ENCODE measurements at regions of chr6 and their contacts with region 1.

Region 1: DNA sequence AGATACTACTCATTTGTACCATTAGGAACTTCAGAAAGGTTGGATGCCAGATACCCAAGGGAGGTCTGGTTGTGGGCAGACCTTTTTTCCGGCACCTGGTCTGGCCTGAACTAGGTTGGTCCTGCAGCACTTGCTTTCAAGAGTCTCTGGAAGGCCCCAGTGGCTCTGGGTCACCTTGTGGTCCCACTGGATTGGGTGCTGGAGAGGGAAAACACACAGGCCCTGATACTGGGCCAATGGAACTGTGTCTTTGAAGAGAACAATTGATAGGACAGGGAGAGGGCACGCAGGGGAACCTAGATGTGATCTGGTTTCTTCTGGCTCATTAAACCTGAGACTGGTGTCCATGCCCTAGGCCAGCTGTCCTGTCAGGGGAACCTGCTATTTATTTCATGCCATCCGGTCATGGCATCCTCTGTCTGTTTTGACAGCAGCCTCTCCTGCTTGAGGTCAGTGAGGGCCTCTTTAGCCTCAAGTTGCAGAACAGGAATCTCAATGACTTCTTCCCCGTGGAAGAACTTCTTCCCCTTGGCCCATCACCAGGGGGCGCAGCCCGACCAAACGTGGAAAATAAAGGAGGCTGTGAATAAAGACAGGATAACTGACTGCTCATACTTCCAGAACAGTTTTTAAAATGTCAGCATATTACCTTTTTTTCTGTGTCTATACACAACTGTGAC is 25.0 kb downstream of the TAF8 start:
- DNase-seq: peak; percentile 87
- ATAC-seq: peak; percentile 73

Region 2: GRCh38 chr6:41659935-41660505 is 415.3 kb before region 1 on chr6:
- intact Hi-C with region 1: no loop called
- DNase-seq: no peak
- ATAC-seq: no peak

Region 3: DNA sequence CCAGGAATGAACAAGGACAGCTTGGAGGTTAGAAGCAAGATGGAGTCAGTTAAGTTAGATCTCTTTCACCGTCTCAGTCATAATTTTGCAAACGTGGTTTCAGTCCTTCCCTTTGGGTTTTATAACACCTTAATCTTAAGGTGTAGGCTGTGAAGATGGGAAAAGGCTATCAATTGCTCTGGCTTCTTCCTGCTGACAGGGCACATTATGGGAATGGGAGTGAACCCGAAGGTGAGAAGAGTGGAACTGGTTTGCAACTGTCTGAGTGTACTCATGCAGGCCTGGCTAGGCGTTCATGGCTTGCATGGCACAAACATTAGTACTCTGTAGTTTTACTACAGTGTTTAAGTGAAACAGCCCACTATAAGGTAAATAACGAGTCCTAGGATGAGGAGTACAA is 15.6 kb before region 1 on chr6:
- intact Hi-C with region 1: no loop called
- DNase-seq: no peak
- ATAC-seq: no peak

Region 4: GRCh38 chr6:42166444-42167141 is 91.3 kb after region 1 on chr6:
- intact Hi-C with region 1: loop called (anchors 10 kb)
- DNase-seq: peak; percentile 83
- ATAC-seq: peak; percentile 78

Region 5: DNA sequence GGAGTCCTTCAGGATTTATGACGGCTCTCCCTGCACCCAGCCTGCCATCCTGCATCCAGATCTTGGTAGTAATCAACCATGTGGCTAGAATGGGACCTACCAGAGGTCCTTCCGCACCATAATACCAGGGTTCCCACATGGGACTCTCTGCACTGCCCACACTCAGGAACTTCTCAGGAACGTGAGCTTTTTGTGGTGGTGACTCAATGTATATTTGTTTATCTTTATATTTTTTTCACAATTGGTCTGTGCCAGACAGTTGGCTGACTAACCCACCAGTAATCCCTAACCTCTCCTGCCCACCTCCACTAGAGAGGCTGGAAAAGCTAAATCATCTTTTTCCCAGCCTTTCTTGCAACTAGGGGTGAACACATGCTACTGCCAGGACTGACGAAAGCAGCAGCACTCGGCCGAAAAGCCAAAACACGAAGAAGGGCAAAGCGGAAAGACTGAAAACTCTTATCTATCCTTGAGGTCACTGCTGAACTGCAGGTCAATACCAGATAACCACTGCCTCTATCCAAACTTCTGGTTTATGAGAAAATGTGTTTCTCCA is 263.4 kb after region 1 on chr6:
- intact Hi-C with region 1: no loop called
- DNase-seq: no peak
- ATAC-seq: no peak

Measured in sciatic nerve (tissue), 2 donors.